CD4-positive, alpha-beta T cell (primary cell): ENCODE measurements at regions of chr15 and their contacts with region 1.

Region 1: DNA sequence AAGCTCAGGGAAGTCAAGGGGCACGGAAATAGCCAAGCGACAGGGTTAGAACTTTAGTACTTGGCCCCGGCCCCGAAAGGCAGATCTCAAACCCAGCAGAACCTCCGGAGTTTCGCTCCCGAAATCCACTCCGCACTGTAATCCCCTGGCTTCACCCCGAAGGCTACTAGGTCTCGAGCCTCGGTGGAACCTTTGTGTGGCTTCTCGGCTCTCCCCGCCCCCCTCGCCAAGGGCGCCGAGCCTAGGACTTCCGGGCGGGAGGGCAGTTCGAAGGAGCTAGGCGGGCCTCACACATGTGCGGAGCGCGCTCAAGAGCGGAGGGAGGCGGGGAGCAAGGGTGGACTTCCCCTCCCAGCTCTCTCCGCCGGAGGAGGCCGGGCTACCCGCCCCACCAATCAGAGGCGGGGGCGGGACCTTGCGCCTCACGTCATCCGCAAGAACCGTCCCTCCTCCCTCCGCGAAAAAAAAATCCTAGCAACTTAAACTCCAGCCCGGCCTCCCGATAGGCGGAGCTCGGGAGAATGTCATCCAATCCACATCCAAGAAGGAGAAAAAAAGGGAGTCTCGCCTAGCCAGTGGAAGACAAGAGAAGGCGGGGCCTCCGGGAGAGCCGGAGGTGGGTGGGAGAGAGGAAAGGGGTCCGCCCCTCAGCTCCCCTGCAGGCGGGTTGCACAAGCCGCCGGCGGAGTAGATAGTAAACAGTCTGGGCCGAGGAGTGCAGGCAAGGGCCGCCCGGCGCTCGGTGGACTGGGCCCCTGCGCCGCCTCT is 2.4 kb upstream of the SIN3A start:
- DNase-seq: peak; percentile 90 to 100 (median 96)
- ATAC-seq: peak; percentile 37
- H3K4me3 ChIP-seq: peak overlapping the region; percentile 93
- H3K4me3 Mint-ChIP-seq: peak overlapping the region; percentile 98
- H3K27ac ChIP-seq: peak overlapping the region; percentile 91 to 99
- H3K27ac Mint-ChIP-seq: peak overlapping the region; percentile 96
- H3K4me1 ChIP-seq: peaks cover 43% of the 10 kb centered on the region
- H3K4me1 Mint-ChIP-seq: peaks cover 43% of the 10 kb centered on the region
- H3K27me3 ChIP-seq: no peaks in the 10 kb centered on the region
- H3K27me3 Mint-ChIP-seq: no peaks in the 10 kb centered on the region
- CTCF ChIP-seq: no peak

Region 2: GRCh38 chr15:74615508-74616365 is 838.1 kb before region 1 on chr15 and contains the start of gene CLK3:
- CTCF ChIA-PET with region 1: no interaction called
- POLR2A ChIA-PET with region 1: interaction called, 6 read pairs
- intact Hi-C with region 1: loop called (anchors 5 to 10 kb)
- DNase-seq: peak; percentile 92 to 99 (median 97)
- ATAC-seq: peak; percentile 70
- H3K4me3 ChIP-seq: peak within 1 kb of the TSS; percentile 100
- H3K4me3 Mint-ChIP-seq: peak within 1 kb of the TSS; percentile 94
- H3K27ac ChIP-seq: peak within 1 kb of the TSS; percentile 95 to 98
- H3K27ac Mint-ChIP-seq: peak within 1 kb of the TSS; percentile 99
- H3K4me1 ChIP-seq: peaks cover 63% of the 10 kb centered on the region
- H3K4me1 Mint-ChIP-seq: peaks cover 42% of the 10 kb centered on the region
- H3K27me3 ChIP-seq: no peaks in the 10 kb centered on the region
- H3K27me3 Mint-ChIP-seq: no peaks in the 10 kb centered on the region
- CTCF ChIP-seq: no peak
- total RNA-seq, gene CLK3: 275 to 293 TPM

Region 3: GRCh38 chr15:75023181-75023871 is 430.6 kb before region 1 on chr15 and contains the start of gene PPCDC:
- CTCF ChIA-PET with region 1: no interaction called
- POLR2A ChIA-PET with region 1: interaction called, 6 read pairs
- intact Hi-C with region 1: loop called in 1 of 2 experiments (anchors 10 kb)
- DNase-seq: peak; percentile 83 to 96 (median 90)
- ATAC-seq: peak; percentile 100
- H3K4me3 ChIP-seq: peak within 1 kb of the TSS; percentile 81
- H3K4me3 Mint-ChIP-seq: peak within 1 kb of the TSS; percentile 99
- H3K27ac ChIP-seq: peak within 1 kb of the TSS; percentile 46 to 50
- H3K27ac Mint-ChIP-seq: peak within 1 kb of the TSS; percentile 94
- H3K4me1 ChIP-seq: peaks cover 20% of the 10 kb centered on the region
- H3K4me1 Mint-ChIP-seq: peaks cover 23% of the 10 kb centered on the region
- H3K27me3 ChIP-seq: no peaks in the 10 kb centered on the region
- H3K27me3 Mint-ChIP-seq: no peaks in the 10 kb centered on the region
- CTCF ChIP-seq: no peak
- total RNA-seq, gene PPCDC: 5.5 to 5.8 TPM

Region 4: DNA sequence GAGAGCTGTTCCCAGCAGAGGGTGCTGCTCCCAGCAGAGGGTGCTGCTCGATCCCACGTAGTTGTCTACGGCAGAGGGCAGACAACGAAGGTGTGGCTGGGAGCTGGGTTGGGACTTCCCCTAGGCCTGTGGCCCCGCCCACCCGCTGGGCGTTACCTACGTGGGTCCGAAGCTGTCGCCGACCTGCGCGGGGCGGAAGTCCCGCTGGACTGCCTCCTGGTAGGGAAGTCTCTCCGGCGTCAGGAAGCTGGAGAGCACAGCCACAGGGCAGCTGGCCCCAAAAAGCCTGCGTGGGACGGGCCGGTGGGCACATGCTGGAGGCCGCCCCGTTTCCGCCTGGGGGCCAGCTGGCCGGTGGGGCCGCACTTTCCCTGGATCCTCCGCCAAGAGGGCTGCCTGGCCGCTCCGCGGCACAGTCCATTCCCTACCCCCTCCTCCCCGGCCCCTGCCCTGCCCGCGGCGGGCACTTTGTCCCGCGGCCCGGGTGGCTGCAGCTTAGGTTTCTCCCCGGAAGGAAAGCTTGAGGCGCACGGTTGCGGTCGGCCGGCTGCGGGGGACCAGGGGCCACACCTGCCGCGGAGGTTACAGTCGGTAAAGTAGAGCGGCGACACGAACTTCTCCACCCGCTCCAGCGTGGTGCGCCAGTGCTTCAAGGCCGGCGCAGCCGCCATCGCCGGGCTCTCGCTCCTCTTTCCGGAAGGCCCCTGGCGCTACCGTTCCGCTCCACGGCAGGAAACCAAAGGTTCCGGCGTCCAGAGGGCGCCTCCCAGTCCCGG is 85.8 kb before region 1 on chr15 and contains the start of gene MAN2C1:
- CTCF ChIA-PET with region 1: interaction called, 26 read pairs
- POLR2A ChIA-PET with region 1: interaction called, 246 read pairs
- intact Hi-C with region 1: loop called (anchors 1 to 5 kb)
- DNase-seq: peak; percentile 80 to 97 (median 88)
- ATAC-seq: peak; percentile 95
- H3K4me3 ChIP-seq: peak within 1 kb of the TSS; percentile 91
- H3K4me3 Mint-ChIP-seq: peak within 1 kb of the TSS; percentile 94
- H3K27ac ChIP-seq: peak within 1 kb of the TSS; percentile 93 to 96
- H3K27ac Mint-ChIP-seq: peak within 1 kb of the TSS; percentile 94
- H3K4me1 ChIP-seq: peaks cover 32% of the 10 kb centered on the region
- H3K4me1 Mint-ChIP-seq: peaks cover 30% of the 10 kb centered on the region
- H3K27me3 ChIP-seq: no peaks in the 10 kb centered on the region
- H3K27me3 Mint-ChIP-seq: no peaks in the 10 kb centered on the region
- CTCF ChIP-seq: peak; percentile 59
- total RNA-seq, gene MAN2C1: 519 to 546 TPM

Region 5: DNA sequence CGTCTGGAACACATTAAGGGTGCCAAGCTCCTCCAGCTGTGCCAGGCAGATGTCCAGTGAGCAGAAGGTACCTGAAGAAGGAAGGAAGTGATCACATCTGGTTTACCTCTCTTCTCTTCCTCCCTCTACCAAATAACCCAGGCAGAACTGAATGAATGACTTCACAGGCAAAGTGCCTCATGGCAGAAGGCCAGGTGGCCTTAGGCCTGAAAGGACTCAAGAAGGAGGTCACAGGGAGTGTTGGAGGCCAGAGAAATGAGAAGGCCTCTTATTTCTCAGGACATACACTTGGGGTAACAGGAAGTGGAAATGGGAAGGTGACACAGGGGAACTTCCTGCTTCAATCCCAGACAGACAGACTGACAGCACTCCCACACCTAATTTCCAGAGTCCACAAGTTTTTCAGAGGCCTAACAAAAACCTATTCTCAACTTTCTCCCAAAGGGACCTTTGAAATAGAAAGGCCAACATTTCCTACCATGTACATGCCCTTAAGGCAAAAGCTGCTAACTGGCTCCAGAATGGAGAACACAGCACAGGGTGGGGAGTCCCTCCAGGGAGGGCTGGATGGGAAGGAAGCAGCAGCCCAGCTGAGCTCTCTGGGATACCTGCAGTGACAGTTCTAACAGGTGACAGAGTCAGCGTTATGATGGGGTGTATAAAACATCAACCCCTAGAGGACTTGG is 15.2 kb after region 1 on chr15:
- CTCF ChIA-PET with region 1: no interaction called
- POLR2A ChIA-PET with region 1: interaction called, 16 read pairs
- intact Hi-C with region 1: no loop called
- DNase-seq: no peak
- ATAC-seq: no peak
- H3K4me3 ChIP-seq: no peak overlapping the region
- H3K4me3 Mint-ChIP-seq: no peak overlapping the region
- H3K27ac ChIP-seq: no peak overlapping the region
- H3K27ac Mint-ChIP-seq: no peak overlapping the region
- H3K4me1 ChIP-seq: no peaks in the 10 kb centered on the region
- H3K4me1 Mint-ChIP-seq: no peaks in the 10 kb centered on the region
- H3K27me3 ChIP-seq: no peaks in the 10 kb centered on the region
- H3K27me3 Mint-ChIP-seq: no peaks in the 10 kb centered on the region
- CTCF ChIP-seq: no peak

Region 6: GRCh38 chr15:75606711-75607699 is 153.1 kb after region 1 on chr15:
- CTCF ChIA-PET with region 1: no interaction called
- POLR2A ChIA-PET with region 1: interaction called, 54 read pairs
- intact Hi-C with region 1: no loop called
- DNase-seq: peak in 8 of 14 experiments; percentile 6 to 77 (median 24)
- ATAC-seq: peak; percentile 75
- H3K4me3 ChIP-seq: peak overlapping the region; percentile 34
- H3K4me3 Mint-ChIP-seq: peak overlapping the region; percentile 68
- H3K27ac ChIP-seq: peak overlapping the region; percentile 44 to 63
- H3K27ac Mint-ChIP-seq: peak overlapping the region; percentile 76
- H3K4me1 ChIP-seq: peaks cover 48% of the 10 kb centered on the region
- H3K4me1 Mint-ChIP-seq: peaks cover 45% of the 10 kb centered on the region
- H3K27me3 ChIP-seq: no peaks in the 10 kb centered on the region
- H3K27me3 Mint-ChIP-seq: no peaks in the 10 kb centered on the region
- CTCF ChIP-seq: no peak

Region 7: DNA sequence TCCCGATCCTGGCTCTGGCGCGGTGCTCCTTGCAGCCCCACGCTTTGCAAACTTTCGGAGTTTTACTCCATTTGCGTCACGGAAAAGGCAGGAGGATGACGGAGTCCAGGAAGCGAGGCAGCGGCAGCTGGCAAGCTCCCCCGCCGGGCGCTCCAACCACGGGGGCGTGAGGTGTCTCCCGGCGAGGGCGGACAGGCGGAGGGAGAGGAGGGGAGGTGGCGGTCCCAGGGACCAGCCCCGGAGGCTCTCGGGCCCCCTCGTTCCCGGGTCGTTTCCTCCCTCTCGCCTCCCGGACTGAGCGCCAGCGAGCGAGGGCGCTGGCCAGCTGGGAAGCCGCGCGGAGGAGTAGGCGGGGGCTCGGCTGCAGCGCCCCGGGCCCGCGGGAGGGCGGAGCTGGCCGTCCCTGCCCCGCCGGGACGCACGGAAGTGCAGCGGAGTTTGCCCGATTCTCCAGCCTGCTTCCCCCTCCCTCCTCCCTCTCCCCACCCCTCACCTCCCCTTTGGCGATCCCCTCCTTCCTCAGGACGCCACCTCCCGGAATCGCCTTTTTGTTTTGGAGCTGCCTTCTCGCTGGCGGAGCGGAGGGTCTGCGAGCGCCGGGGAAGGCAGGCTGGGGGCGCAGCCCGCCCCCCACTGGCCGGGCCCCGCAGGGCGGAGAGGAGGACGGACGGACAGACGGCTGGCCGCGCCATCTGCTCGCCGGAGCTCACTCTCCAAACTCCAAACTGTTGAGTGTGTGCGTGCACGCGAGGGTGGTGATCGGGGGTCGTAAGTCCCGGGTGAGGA is 193.7 kb after region 1 on chr15 and contains the start of gene SNX33:
- CTCF ChIA-PET with region 1: no interaction called
- POLR2A ChIA-PET with region 1: interaction called, 15 read pairs
- intact Hi-C with region 1: no loop called
- DNase-seq: peak; percentile 10 to 75 (median 38)
- ATAC-seq: peak; percentile 68
- H3K4me3 ChIP-seq: peak within 1 kb of the TSS; percentile 84
- H3K4me3 Mint-ChIP-seq: peak within 1 kb of the TSS; percentile 86
- H3K27ac ChIP-seq: peak within 1 kb of the TSS in 1 of 2 donors; percentile 1
- H3K27ac Mint-ChIP-seq: peak within 1 kb of the TSS; percentile 42
- H3K4me1 ChIP-seq: peaks cover 41% of the 10 kb centered on the region
- H3K4me1 Mint-ChIP-seq: peaks cover 31% of the 10 kb centered on the region
- H3K27me3 ChIP-seq: no peaks in the 10 kb centered on the region
- H3K27me3 Mint-ChIP-seq: no peaks in the 10 kb centered on the region
- CTCF ChIP-seq: no peak
- total RNA-seq, gene SNX33: 0.59 to 0.82 TPM